ENCODE measurements at regions of chr13 and their contacts with region 1.

Region 1: GRCh38 chr13:31199849-31200636 is at the start of gene B3GLCT:
- DNase-seq: peak; percentile 97
- H3K4me3 ChIP-seq: peak within 1 kb of the TSS; percentile 76 to 84
- H3K27ac ChIP-seq: peak within 1 kb of the TSS; percentile 82 to 93
- H3K4me1 ChIP-seq: peaks cover 11 to 14% of the 10 kb centered on the region in 2 experiments; a peak in 3 of 4 replicates
- H3K27me3 ChIP-seq: no peaks in the 10 kb centered on the region
- CTCF ChIP-seq: peak; percentile 63
- EP300 ChIP-seq: peak in 1 of 2 experiments; percentile 32; a peak in 1 of 4 replicates
- RAD21 ChIP-seq: peak; percentile 60
- polyA plus RNA-seq, gene B3GLCT: 2.4 and 2.8 TPM in 2 replicates

Region 2: DNA sequence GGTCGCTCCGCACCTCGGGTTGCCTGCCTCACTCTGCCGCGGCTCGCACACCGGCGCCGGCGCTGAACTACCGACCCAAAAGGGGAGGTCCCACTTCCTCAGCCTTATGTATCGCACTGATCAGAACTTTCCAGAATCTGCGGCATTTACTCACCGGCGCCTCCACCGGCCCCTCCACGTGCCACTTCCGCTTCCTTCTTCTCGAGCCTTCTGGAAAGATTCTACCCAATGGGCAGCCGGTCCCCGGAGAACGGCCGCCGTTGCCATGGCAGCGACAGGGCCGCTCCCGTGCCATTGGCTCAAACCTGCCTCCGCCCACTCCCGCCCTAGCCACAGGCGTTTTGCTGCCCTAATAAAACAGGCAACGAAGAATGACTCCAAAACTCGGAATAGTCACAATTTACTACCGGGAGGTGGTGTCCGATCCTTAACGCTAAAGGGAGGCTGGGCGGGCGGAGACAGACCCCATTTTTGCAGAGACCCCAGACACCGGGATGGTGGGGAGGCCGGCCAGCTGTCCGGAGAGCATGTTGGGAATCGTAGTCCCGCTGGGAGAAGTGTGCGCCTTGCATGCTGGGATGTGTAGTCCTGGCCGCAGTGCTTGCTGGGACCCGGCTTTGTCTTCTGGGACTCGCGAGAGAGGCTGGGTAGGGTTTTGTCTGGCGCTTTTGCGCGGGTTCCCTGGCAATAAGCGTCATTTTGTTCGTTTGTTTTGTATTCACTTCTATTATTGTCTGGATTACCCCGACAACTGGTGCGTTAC is 38.0 kb before region 1 on chr13 and contains the start of gene HSPH1:
- CTCF ChIA-PET with region 1: interaction called, 11 read pairs
- POLR2A ChIA-PET with region 1: no interaction called
- DNase-seq: peak; percentile 94
- H3K4me3 ChIP-seq: peak within 1 kb of the TSS; percentile 86 to 98
- H3K27ac ChIP-seq: peak within 1 kb of the TSS; percentile 92 to 96
- H3K4me1 ChIP-seq: peaks cover 0 to 15% of the 10 kb centered on the region in 2 experiments; a peak in 2 of 4 replicates
- H3K27me3 ChIP-seq: no peaks in the 10 kb centered on the region
- CTCF ChIP-seq: peak; percentile 35; the same call in 1 of the 2 replicates
- EP300 ChIP-seq: peak; percentile 6 to 88; a peak in 3 of 4 replicates
- RAD21 ChIP-seq: no peak
- polyA plus RNA-seq, gene HSPH1: 30.4 and 32.8 TPM in 2 replicates

Region 3: DNA sequence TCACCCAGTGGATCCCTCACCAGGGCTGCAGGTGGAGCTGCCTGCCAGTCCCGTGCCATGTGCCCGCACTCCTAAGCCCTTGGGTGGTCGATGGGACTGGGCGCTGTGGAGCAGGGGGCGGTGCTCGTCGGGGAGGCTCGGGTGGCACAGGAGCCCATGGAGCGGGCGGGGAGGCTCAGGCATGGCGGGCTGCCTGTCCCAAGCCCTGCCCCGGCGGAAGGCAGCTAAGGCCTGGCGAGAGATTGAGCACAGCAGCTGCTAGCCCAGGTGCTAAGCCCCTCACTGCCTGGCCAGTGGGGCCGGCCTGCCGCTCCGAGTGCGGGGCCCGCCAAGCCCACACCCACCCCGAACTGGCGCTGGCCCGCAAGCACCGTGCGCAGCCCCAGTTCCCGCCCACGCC is 17.1 kb before region 1 on chr13:
- CTCF ChIA-PET with region 1: interaction called, 25 read pairs
- POLR2A ChIA-PET with region 1: no interaction called
- DNase-seq: no peak
- H3K4me3 ChIP-seq: no peak overlapping the region
- H3K27ac ChIP-seq: no peak overlapping the region
- H3K4me1 ChIP-seq: no peaks in the 10 kb centered on the region
- H3K27me3 ChIP-seq: no peaks in the 10 kb centered on the region
- CTCF ChIP-seq: no peak
- EP300 ChIP-seq: no peak
- RAD21 ChIP-seq: no peak

Region 4: DNA sequence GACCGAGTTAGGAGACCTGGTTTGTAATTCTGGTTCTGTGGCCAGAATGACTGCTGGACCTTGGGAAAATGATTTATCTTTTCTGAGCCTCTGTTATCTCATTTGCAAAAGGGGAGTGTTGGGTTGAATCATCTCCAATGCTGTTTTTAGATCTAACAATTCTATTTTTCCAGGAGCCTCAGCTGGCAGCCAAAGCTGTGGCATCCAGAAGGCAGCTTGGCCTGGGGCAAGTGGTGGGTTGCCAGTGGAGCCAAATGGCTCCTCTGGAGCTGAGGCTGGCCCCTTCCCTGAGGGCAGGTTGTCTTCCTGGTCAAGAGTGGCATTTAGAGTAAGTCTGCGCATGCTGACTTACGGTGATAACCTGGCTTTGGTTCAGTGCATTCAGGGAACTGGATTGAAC is 21.0 kb after region 1 on chr13:
- CTCF ChIA-PET with region 1: interaction called, 10 read pairs
- POLR2A ChIA-PET with region 1: no interaction called
- DNase-seq: no peak
- H3K4me3 ChIP-seq: no peak overlapping the region
- H3K27ac ChIP-seq: no peak overlapping the region
- H3K4me1 ChIP-seq: peaks cover 0 to 3% of the 10 kb centered on the region in 2 experiments; a peak in 1 of 4 replicates
- H3K27me3 ChIP-seq: no peaks in the 10 kb centered on the region
- CTCF ChIP-seq: no peak
- EP300 ChIP-seq: no peak
- RAD21 ChIP-seq: no peak

Region 5: GRCh38 chr13:31227063-31227462 is 27.0 kb after region 1 on chr13:
- CTCF ChIA-PET with region 1: interaction called, 13 read pairs
- POLR2A ChIA-PET with region 1: no interaction called
- DNase-seq: no peak
- H3K4me3 ChIP-seq: no peak overlapping the region
- H3K27ac ChIP-seq: peak overlapping the region in 1 of 2 experiments; percentile 40; a peak in 1 of 4 replicates
- H3K4me1 ChIP-seq: no peaks in the 10 kb centered on the region; a peak in 3 of 4 replicates
- H3K27me3 ChIP-seq: no peaks in the 10 kb centered on the region
- CTCF ChIP-seq: no peak
- EP300 ChIP-seq: no peak
- RAD21 ChIP-seq: no peak

Region 6: GRCh38 chr13:31424117-31424729 is 224.2 kb after region 1 on chr13:
- CTCF ChIA-PET with region 1: interaction called, 20 read pairs
- POLR2A ChIA-PET with region 1: no interaction called
- DNase-seq: peak; percentile 73
- H3K4me3 ChIP-seq: no peak overlapping the region; a peak in 1 of 4 replicates
- H3K27ac ChIP-seq: no peak overlapping the region
- H3K4me1 ChIP-seq: no peaks in the 10 kb centered on the region; a peak in 1 of 4 replicates
- H3K27me3 ChIP-seq: no peaks in the 10 kb centered on the region; the same call in 1 of the 2 replicates
- CTCF ChIP-seq: peak; percentile 92
- EP300 ChIP-seq: no peak
- RAD21 ChIP-seq: peak; percentile 96